PC-9 (cell line): ENCODE measurements at regions of chr1 and their contacts with region 1.

Region 1: DNA sequence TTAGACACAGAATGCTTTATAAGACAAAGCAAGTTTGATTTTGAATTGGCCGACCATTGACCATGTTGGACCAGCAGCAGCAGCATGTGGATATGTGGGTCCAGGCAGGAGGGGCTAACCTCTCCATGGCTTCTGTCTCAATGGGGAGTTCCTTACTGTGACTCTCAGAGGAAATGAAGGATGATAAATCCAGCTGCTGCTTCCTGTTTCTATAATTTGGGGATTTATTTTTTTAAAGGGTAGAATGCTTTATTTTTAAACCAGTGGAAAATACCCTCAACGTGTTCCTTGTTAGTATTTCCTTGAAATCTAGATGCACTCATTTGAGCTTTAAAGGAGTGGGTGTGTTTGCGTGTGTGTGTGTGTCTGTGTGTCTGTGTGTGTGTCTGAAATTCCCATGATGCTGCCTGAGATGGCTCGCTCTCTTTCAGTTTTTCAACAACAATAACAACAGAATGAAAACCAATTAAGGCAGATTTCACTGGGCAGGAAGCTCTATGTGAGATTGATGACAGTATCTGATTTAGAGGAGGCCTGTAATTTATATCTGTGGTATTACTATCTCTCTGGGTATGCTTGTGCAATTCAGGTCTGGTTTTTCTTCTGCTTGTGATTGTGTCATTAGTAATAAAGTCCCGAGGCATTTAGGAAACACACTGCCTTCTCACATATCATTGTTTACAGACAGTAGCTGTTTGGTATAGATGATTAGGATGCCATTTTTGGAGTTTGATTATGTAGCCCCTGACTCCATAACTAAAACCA is 86.1 kb upstream of the ZNF326 start:
- DNase-seq: peak in 1 of 2 experiments; percentile 95
- H3K4me3 ChIP-seq: peak overlapping the region; percentile 7; the same call in 1 of the 2 replicates
- H3K27ac ChIP-seq: peak overlapping the region; percentile 92
- H3K4me1 ChIP-seq: peaks cover 91% of the 10 kb centered on the region
- H3K27me3 ChIP-seq: no peaks in the 10 kb centered on the region
- CTCF ChIP-seq: no peak

Region 2: GRCh38 chr1:89843281-89844121 is 65.4 kb before region 1 on chr1:
- CTCF ChIA-PET with region 1: interaction called, 3 read pairs
- POLR2A ChIA-PET with region 1: interaction called, 10 read pairs
- intact Hi-C with region 1: no loop called
- DNase-seq: peak; percentile 45 to 67
- H3K4me3 ChIP-seq: peak overlapping the region; percentile 78
- H3K27ac ChIP-seq: peak overlapping the region; percentile 60
- H3K4me1 ChIP-seq: peaks cover 45% of the 10 kb centered on the region
- H3K27me3 ChIP-seq: no peaks in the 10 kb centered on the region
- CTCF ChIP-seq: peak; percentile 68

Region 3: DNA sequence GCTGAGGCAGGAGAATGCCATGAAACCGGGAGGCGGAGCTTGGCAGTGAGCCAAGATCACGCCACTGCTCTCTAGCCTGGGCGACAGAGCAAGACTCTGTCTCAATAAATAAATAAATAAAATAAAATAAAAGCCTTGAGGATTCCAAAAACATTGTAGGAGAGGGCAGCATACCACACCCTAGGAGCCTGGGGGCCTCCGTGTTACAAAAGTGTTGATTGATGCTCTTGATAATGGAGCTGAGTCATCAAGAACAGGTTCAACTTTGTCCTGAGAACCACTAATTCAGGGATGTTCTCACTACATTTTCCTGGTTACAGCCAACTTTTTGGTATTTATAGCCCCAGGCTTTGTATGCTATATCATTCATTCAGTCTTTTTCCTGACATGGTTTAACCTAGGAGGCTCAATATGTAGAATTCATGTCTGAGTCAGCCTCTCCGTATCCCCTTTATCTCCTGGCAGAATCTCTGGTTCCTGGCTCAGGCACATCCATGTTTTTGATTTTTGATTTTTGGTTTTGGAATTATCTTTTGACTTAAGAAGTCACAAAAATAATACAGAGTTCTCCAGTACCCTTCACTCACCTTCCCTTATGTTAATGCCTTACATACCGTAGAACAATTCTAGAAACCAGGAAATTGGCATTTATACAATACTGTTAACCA is 18.6 kb before region 1 on chr1:
- CTCF ChIA-PET with region 1: no interaction called
- POLR2A ChIA-PET with region 1: interaction called, 6 read pairs
- intact Hi-C with region 1: loop called (anchors 1 kb)
- DNase-seq: peak; percentile 88 to 100
- H3K4me3 ChIP-seq: peak overlapping the region; percentile 14; the same call in 1 of the 2 replicates
- H3K27ac ChIP-seq: peak overlapping the region; percentile 94
- H3K4me1 ChIP-seq: peaks cover 93% of the 10 kb centered on the region
- H3K27me3 ChIP-seq: no peaks in the 10 kb centered on the region
- CTCF ChIP-seq: no peak

Region 4: DNA sequence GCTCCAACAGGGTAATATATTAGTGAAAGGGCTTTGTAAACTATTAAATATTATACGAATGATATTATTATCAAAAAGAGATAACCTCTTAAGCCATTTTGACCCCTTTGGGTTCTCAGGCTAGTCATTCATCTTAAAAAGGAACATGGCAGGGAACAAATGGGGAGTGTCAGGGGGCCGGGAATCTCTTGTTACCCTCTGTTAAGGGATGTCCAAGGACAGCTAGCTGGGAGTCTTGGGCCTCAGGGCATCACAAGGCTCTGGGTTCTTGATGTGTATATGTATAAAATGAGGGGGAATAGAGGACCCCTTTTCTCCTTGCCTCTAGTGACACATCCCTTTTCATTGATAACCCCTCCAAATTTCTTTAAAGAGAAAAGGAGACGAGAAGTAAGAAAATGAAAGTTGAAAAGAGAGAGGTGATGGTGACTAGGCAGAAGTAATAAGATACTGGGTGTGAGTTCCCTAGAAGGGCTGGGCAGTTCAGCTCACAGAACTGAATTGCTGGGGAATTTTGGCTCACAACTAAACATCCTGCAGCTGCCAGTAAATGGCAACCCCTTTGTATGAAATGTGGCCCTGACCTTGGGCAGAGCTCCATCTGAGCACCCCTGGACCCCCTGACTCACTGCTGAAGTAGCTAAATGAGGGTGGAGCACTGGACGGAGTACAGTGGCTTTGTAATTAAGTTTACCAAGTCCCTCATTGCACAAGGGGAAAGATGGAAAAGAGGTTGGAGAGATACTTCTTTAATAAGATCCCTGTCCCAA is 66.0 kb after region 1 on chr1:
- CTCF ChIA-PET with region 1: interaction called, 4 read pairs
- POLR2A ChIA-PET with region 1: interaction called, 22 read pairs
- intact Hi-C with region 1: loop called (anchors 1 kb)
- DNase-seq: peak; percentile 85 to 99
- H3K4me3 ChIP-seq: peak overlapping the region; percentile 48
- H3K27ac ChIP-seq: peak overlapping the region; percentile 99
- H3K4me1 ChIP-seq: peaks cover 67% of the 10 kb centered on the region
- H3K27me3 ChIP-seq: no peaks in the 10 kb centered on the region
- CTCF ChIP-seq: 0 out of 2 replicates have a peak, but pooled peaks have one; percentile 21

Region 5: GRCh38 chr1:90027281-90027680 is 118.4 kb after region 1 on chr1:
- CTCF ChIA-PET with region 1: no interaction called
- POLR2A ChIA-PET with region 1: interaction called, 17 read pairs
- intact Hi-C with region 1: no loop called
- DNase-seq: no peak
- H3K4me3 ChIP-seq: no peak overlapping the region
- H3K27ac ChIP-seq: no peak overlapping the region
- H3K4me1 ChIP-seq: no peaks in the 10 kb centered on the region
- H3K27me3 ChIP-seq: no peaks in the 10 kb centered on the region
- CTCF ChIP-seq: no peak